H1 (cell line): ENCODE measurements at regions of chr14 and their contacts with region 1.

Region 1: DNA sequence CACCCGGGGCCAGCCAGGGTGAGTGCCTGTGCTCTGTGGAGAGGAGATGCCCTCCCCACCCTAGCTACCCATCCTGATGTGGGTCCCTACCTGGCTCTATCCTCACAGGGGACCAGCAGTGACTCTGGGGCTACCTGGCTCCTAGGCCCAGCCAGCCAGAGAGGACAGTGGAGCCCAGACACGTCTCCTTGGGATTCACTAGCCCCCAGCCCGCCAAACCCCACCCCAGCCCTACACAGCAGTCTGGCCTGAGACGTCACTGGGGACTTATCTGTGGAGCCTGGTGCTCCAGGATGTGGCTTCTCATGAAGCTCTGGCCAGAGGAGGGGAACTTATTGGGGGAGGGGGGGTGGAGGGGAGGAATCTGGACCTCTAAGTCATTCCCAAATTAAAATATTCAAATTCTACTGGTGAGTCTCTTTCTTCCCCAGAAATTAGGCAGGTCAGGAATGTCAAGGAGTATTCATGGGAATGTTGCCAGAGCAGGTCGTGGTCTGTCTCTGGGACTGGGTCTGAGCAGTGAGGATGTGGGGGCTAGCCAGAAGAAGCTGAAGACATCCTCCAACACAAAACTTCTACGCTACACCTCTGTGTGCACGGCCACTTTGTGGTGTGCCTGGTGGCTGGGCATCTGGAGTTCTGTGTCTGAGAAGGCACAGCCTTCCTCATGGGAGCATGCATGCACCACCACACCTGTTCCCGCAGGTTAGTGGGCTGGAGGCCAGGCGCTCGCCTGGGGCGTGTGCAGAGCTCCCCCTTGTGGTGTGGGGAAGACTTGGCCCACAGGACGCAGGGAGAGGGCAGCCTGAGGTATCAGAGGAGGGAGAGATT is 2.7 kb downstream of the CMTM5 start:
- DNase-seq: peak in 1 of 2 experiments; percentile 81
- H3K4me3 ChIP-seq: no peak overlapping the region
- H3K27ac ChIP-seq: no peak overlapping the region
- H3K4me1 ChIP-seq: peaks cover 0 to 12% (median 4%) of the 10 kb centered on the region in 4 experiments; a peak in 3 of 7 replicates
- H3K27me3 ChIP-seq: peaks cover 0 to 23% (median 11%) of the 10 kb centered on the region in 4 experiments; a peak in 6 of 7 replicates
- CTCF ChIP-seq: peak; percentile 92 to 97 (median 95)
- EP300 ChIP-seq: no peak
- POLR2A ChIP-seq: no peak
- RAD21 ChIP-seq: peak; percentile 95

Region 2: GRCh38 chr14:23207146-23207540 is 172.4 kb before region 1 on chr14:
- CTCF ChIA-PET with region 1: no interaction called
- POLR2A ChIA-PET with region 1: no interaction called
- DNase-seq: no peak
- H3K4me3 ChIP-seq: peak overlapping the region in 2 of 4 experiments; percentile 7 to 54; a peak in 3 of 8 replicates
- H3K27ac ChIP-seq: peak overlapping the region; percentile 45
- H3K4me1 ChIP-seq: peaks cover 0 to 13% (median 4%) of the 10 kb centered on the region in 4 experiments; a peak in 4 of 7 replicates
- H3K27me3 ChIP-seq: no peaks in the 10 kb centered on the region
- CTCF ChIP-seq: no peak
- EP300 ChIP-seq: no peak
- POLR2A ChIP-seq: no peak
- RAD21 ChIP-seq: no peak

Region 3: DNA sequence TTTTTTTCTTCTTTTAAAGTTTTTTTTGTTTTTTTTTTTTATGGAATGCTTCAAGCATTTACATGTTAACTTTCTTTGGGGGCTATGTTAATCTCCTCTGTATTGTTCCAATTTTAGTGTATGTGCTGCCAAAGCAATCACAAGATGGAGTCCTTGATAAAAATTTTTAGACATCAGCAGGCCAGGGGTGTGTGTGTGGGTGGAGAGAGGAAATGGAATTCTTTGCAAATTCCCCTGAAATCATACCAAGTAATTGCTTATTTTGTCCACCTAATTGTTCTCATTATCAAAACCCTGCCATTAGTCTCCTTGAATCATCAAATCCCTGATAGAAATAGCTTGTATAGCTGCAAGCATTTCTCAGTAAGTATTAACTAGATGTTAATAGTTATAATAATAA is 120.2 kb before region 1 on chr14:
- CTCF ChIA-PET with region 1: interaction called, 10 read pairs
- POLR2A ChIA-PET with region 1: no interaction called
- DNase-seq: no peak
- H3K4me3 ChIP-seq: no peak overlapping the region
- H3K27ac ChIP-seq: no peak overlapping the region
- H3K4me1 ChIP-seq: peaks cover 0 to 6% (median 0%) of the 10 kb centered on the region in 4 experiments; a peak in 1 of 7 replicates
- H3K27me3 ChIP-seq: no peaks in the 10 kb centered on the region
- CTCF ChIP-seq: no peak
- EP300 ChIP-seq: no peak
- POLR2A ChIP-seq: no peak
- RAD21 ChIP-seq: no peak

Region 4: DNA sequence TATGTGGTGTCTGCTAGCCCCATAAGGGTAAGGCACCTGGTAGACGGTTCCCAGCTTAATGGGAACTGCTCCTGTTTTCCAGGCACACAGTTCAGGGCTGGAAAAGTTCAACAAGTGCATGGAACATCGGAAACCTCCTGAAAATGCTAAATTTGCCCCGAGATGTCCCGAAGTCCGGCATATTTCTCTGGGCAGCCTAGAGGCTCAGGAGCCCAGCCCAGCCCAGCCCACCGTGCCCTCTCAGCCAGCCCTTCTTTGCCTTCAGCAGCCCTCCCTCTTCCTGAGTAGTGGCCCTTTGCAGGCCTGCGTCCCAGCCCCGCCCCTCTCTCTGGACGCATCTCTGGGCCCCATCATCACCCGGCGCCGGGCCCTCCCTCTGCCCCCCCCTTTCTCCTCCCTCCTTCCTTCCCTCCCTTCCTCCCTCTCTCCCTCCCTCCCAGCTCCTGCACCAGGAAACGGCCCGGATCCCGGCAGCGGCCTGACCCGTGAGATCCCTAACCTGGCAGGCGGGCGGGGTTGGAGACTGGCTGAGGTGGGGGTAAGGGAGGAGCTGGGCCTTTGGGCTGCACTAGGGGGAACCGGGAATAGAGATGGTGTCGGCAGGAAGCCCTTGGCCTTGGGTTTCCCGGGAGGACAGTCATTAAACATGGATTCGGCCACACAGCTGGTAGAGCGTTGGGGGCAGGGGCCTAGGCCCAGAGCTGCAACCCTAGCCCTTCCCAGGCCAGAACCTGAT is 73.0 kb before region 1 on chr14 and contains the start of gene BCL2L2:
- CTCF ChIA-PET with region 1: interaction called, 23 read pairs
- POLR2A ChIA-PET with region 1: no interaction called
- DNase-seq: peak; percentile 70 to 90
- H3K4me3 ChIP-seq: peak within 1 kb of the TSS; percentile 57 to 90 (median 83)
- H3K27ac ChIP-seq: peak within 1 kb of the TSS; percentile 83; the same call in 1 of the 2 replicates
- H3K4me1 ChIP-seq: peaks cover 0 to 3% (median 1%) of the 10 kb centered on the region in 4 experiments; a peak in 4 of 7 replicates
- H3K27me3 ChIP-seq: peaks cover 0 to 12% (median 5%) of the 10 kb centered on the region in 4 experiments; a peak in 4 of 7 replicates
- CTCF ChIP-seq: no peak
- EP300 ChIP-seq: peak in 1 of 2 experiments; percentile 79; a peak in 1 of 3 replicates
- POLR2A ChIP-seq: peak; percentile 85 to 91
- RAD21 ChIP-seq: 0 out of 4 replicates have a peak, but pooled peaks of 1 of the 2 experiments have one; percentile 9
- total RNA-seq, gene BCL2L2: 13.3 and 13.8 TPM in 2 replicates

Region 5: DNA sequence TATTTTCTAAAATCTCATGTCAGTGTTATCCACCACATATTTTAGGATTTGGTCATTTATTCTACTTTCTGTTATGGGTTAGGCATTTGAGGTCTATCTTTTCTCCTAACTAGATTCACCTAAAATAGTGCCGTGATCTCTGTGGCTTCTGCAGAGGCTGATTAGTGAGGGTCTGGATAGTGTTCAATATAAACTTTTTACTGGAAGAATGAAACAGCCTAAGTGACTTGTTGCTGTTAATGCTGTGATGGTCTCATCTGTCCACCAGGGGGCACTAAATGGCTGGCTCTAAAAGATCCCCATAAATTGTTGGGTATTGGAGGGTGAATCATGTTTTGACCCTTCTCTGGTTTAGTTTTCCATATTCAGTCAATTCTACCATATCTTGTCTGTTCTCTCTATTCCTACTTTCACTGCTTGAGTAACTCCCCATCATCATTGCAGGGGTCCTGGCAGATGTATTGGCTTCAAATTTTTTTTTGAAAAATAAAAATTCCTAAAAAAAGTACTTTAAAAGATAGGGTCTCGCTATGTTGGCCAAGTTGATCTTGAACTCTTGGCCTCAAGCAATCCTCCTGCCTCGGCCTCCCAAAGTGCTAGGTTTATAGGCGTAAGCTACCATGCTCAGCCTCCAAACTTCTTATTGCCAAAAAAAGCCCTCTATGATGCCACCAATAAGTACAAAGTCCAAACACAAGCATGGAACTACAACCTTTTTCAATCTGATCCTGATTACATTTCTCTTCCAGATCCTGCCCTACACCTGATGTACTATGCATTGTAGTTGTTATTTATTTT is 51.4 kb before region 1 on chr14:
- CTCF ChIA-PET with region 1: interaction called, 60 read pairs
- POLR2A ChIA-PET with region 1: interaction called, 19 read pairs
- DNase-seq: peak in 1 of 2 experiments; percentile 69
- H3K4me3 ChIP-seq: no peak overlapping the region
- H3K27ac ChIP-seq: no peak overlapping the region
- H3K4me1 ChIP-seq: no peaks in the 10 kb centered on the region
- H3K27me3 ChIP-seq: no peaks in the 10 kb centered on the region
- CTCF ChIP-seq: peak in 2 of 3 experiments; percentile 82 to 89; a peak in 3 of 4 replicates
- EP300 ChIP-seq: no peak
- POLR2A ChIP-seq: no peak; a peak in 1 of 3 replicates
- RAD21 ChIP-seq: peak; percentile 90 to 91

Region 6: GRCh38 chr14:23344442-23344841 is 35.1 kb before region 1 on chr14:
- CTCF ChIA-PET with region 1: interaction called, 33 read pairs
- POLR2A ChIA-PET with region 1: no interaction called
- DNase-seq: no peak
- H3K4me3 ChIP-seq: no peak overlapping the region
- H3K27ac ChIP-seq: no peak overlapping the region
- H3K4me1 ChIP-seq: peaks cover 0 to 4% (median 1%) of the 10 kb centered on the region in 4 experiments; a peak in 3 of 7 replicates
- H3K27me3 ChIP-seq: no peaks in the 10 kb centered on the region
- CTCF ChIP-seq: no peak
- EP300 ChIP-seq: no peak
- POLR2A ChIP-seq: no peak
- RAD21 ChIP-seq: no peak

Region 7: DNA sequence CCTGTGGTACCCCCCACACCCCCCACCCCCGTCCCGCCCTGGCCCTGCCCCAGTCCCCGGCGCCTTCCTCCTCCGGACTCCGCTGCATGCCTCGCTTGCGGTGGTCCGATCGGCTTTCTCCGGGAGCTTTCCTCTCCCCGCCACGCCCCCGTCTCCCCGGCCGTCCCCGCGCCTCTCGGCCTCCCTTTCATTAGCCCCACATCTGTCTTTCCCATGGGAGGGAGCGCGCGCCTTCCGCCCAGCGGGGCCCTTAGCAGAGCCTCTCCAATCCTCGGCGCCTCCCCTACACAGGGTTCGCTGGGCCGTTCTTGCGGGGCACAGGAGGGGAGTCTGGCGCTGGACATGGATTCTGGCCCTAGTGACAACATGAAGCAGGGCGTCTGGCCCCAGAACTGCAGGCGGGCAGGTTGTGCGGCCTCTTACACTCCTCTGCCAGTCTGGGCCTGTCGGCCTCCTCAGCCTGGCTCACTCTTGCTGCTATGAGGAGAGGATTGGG is 13.1 kb before region 1 on chr14:
- CTCF ChIA-PET with region 1: interaction called, 333 read pairs
- POLR2A ChIA-PET with region 1: interaction called, 13 read pairs
- DNase-seq: peak in 1 of 2 experiments; percentile 92
- H3K4me3 ChIP-seq: peak overlapping the region; percentile 47 to 79 (median 77)
- H3K27ac ChIP-seq: peak overlapping the region; percentile 65; the same call in 1 of the 2 replicates
- H3K4me1 ChIP-seq: peaks cover 2 to 22% (median 14%) of the 10 kb centered on the region in 4 experiments; a peak in 6 of 7 replicates
- H3K27me3 ChIP-seq: peaks cover 0 to 12% (median 10%) of the 10 kb centered on the region in 4 experiments; a peak in 5 of 7 replicates
- CTCF ChIP-seq: no peak
- EP300 ChIP-seq: no peak
- POLR2A ChIP-seq: no peak
- RAD21 ChIP-seq: no peak

Region 8: GRCh38 chr14:23436327-23437132 is 56.9 kb after region 1 on chr14:
- CTCF ChIA-PET with region 1: interaction called, 19 read pairs
- POLR2A ChIA-PET with region 1: no interaction called
- DNase-seq: no peak
- H3K4me3 ChIP-seq: no peak overlapping the region
- H3K27ac ChIP-seq: no peak overlapping the region
- H3K4me1 ChIP-seq: peaks cover 0 to 6% (median 2%) of the 10 kb centered on the region in 4 experiments; a peak in 2 of 7 replicates
- H3K27me3 ChIP-seq: peaks cover 0 to 4% (median 1%) of the 10 kb centered on the region in 4 experiments; a peak in 2 of 7 replicates
- CTCF ChIP-seq: no peak
- EP300 ChIP-seq: no peak
- POLR2A ChIP-seq: no peak
- RAD21 ChIP-seq: no peak